Activated CD4-positive, alpha-beta memory T cell treated with anti-CD3 and anti-CD28 coated beads for 36 hours (primary cell): ENCODE measurements at regions of chr3 and their contacts with region 1.

Region 1: GRCh38 chr3:151838583-151839312 is 24.8 kb downstream of the AADAC start:
- DNase-seq: peak; percentile 30
- H3K4me3 Mint-ChIP-seq: no peak overlapping the region
- H3K27ac Mint-ChIP-seq: no peak overlapping the region
- H3K4me1 Mint-ChIP-seq: peaks cover 3% of the 10 kb centered on the region
- H3K27me3 Mint-ChIP-seq: peaks cover 5% of the 10 kb centered on the region

Region 2: DNA sequence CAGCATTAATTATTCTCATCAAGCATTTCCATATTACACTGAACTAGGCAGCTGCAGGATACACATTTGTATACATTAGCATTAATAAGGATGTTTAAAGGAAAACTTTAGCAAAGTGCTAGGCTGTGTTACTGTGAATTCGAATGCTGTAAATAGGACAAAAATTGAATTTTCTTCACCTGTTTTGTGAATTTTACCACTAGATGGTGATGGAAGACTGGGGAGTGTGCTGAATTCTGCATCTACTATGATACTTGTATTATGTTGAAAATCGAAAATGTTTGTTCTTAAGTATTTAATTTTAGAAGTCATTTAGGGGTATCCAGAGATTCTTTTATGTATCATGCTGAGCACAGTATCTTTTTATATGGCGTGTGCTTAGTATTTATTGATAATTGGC is 548.1 kb before region 1 on chr3:
- CTCF ChIA-PET with region 1: interaction called, 7 read pairs
- POLR2A ChIA-PET with region 1: no interaction called
- intact Hi-C with region 1: loop called (anchors 2 kb)
- DNase-seq: no peak
- H3K4me3 Mint-ChIP-seq: no peak overlapping the region
- H3K27ac Mint-ChIP-seq: no peak overlapping the region
- H3K4me1 Mint-ChIP-seq: no peaks in the 10 kb centered on the region
- H3K27me3 Mint-ChIP-seq: peaks cover 9% of the 10 kb centered on the region

Region 3: GRCh38 chr3:151439652-151440129 is 399.1 kb before region 1 on chr3:
- CTCF ChIA-PET with region 1: interaction called, 11 read pairs
- POLR2A ChIA-PET with region 1: no interaction called
- intact Hi-C with region 1: loop called (anchors 1 kb)
- DNase-seq: no peak
- H3K4me3 Mint-ChIP-seq: no peak overlapping the region
- H3K27ac Mint-ChIP-seq: no peak overlapping the region
- H3K4me1 Mint-ChIP-seq: no peaks in the 10 kb centered on the region
- H3K27me3 Mint-ChIP-seq: no peaks in the 10 kb centered on the region

Region 4: DNA sequence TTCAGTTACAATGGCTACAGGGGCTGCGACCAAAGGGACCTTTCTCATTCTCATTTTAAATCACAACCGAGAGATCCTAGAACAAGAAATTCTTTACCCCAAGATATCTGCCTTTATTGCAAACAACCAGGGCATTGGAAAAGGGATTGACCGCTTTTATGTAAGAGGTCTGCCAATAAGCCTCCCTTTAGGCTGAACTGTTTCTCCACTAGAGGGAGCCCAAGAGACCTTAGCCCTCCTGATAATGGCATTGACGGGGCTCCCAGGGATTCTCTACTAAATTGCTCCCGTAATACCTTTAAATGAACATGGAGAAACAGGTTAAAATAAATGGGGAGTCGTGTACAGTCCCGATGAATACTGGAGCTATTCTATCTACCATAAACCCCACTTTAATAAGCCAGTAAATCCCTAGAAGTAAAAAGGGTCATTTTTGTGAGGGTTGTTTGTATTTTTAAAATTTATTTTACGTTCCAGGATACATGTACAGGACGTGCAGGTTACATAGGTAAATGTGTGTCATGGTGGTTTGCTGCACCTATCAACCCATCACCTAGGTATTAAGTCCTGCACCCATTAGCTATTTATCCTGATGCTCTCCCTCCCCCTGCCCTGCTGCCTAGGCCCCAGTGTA is 370.3 kb before region 1 on chr3:
- CTCF ChIA-PET with region 1: interaction called, 40 read pairs
- POLR2A ChIA-PET with region 1: no interaction called
- intact Hi-C with region 1: loop called (anchors 1 kb)
- DNase-seq: no peak
- H3K4me3 Mint-ChIP-seq: no peak overlapping the region
- H3K27ac Mint-ChIP-seq: no peak overlapping the region
- H3K4me1 Mint-ChIP-seq: no peaks in the 10 kb centered on the region
- H3K27me3 Mint-ChIP-seq: peaks cover 5% of the 10 kb centered on the region